ENCODE measurements at regions of chr4 and their contacts with region 1.

Region 1: DNA sequence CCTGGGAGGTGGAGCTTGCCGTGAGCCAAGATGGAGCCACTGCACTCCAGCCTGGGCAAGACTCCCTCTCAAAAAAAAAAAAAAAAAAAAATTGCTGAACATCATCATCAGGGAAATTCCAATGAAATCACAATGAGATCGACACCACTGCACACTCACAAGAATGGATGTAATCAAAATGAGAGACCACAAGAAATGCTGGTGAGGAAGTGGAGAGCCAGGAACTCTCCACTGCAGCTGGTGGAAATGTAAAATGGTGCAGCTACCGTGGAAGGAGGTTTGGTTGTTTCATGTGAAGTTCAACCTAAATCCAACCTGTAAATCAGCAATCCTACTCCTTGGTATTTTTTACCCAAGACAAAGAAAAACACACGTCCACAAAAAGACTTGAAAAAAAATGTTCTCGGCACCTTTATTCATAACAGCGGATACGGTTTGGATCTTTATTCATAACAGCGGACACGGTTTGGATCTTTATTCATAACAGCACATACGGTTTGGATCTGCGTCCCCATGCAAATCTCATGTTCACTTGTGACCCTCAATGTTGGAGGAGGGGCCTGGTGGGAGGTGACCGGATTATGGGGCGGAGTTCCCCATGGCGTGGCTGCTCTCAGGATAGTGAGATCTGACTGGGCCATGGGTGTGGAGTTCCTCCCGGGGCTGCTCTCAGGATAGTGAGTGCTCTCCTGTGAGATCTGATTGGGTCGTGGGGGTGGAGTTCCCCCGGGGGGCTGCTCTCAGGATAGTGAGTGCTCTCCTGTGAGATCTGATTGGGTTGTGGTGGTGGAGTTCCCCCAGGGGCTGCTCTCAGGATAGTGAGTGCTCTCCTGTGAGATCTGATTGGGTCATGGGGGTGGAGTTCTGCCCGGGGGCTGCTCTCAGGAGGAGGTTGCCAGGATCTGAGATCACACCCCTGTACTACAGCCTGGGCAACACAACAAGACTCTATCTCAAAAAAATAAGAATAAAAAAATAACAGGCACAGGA is 7.7 kb downstream of the GAK start:
- DNase-seq: peak; percentile 50
- ATAC-seq: peak; percentile 74
- H3K4me3 ChIP-seq: no peak overlapping the region; the same call in 1 of the 2 replicates
- H3K27ac ChIP-seq: peak overlapping the region; percentile 79
- H3K4me1 ChIP-seq: peaks cover 45% of the 10 kb centered on the region
- H3K27me3 ChIP-seq: no peaks in the 10 kb centered on the region
- CTCF ChIP-seq: no peak
- EP300 ChIP-seq: no peak
- POLR2A ChIP-seq: no peak
- RAD21 ChIP-seq: no peak

Region 2: DNA sequence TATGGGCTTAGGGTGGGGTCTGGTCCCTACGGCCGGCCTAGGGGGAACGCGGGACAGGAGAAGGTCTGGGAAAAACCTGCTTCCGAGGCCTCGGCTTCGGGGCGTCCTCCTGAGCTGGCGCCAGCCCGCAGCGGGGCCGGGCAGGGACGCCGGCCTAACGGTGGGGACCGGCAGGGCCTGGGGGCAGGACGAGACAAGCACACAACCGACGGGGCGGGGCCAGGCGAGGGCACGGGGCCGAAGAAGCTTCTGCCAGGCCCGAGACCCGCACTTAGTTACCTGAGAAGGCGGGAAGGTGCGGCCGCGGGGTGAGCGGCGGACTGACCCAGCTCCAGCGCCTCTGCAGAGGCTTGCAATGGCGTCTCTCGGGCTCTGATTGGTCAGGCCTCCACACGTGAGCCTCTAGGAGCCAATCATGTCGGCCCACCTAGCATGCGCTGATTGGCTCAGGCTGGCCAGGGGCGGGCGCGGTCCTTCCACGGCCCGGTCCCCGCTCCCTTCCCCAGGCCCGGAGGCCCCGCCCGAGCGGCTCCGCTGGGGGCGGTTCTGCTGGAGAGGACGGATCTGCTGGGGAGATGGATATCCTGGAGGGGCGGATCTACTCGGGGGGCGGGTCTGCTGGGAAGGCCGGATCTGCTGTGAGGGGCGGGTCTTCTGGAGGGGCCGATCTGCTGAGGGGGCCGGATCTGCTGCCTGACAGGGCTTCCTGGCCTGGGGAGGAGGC is 142.7 kb before region 1 on chr4:
- CTCF ChIA-PET with region 1: no interaction called
- POLR2A ChIA-PET with region 1: interaction called, 7 read pairs
- RAD21 ChIA-PET with region 1: no interaction called
- SMC1A ChIA-PET with region 1: no interaction called
- in situ Hi-C with region 1: no loop called
- intact Hi-C with region 1: loop called (anchors 5 kb)
- DNase-seq: peak; percentile 93
- ATAC-seq: peak; percentile 98
- H3K4me3 ChIP-seq: peak overlapping the region; percentile 92
- H3K27ac ChIP-seq: peak overlapping the region; percentile 96
- H3K4me1 ChIP-seq: peaks cover 11% of the 10 kb centered on the region
- H3K27me3 ChIP-seq: peaks cover 0 to 3% of the 10 kb centered on the region in 2 experiments; a peak in 1 of 4 replicates
- CTCF ChIP-seq: no peak
- EP300 ChIP-seq: no peak
- POLR2A ChIP-seq: peak; percentile 98
- RAD21 ChIP-seq: no peak

Region 3: GRCh38 chr4:891747-892146 is 32.7 kb before region 1 on chr4:
- CTCF ChIA-PET with region 1: no interaction called
- POLR2A ChIA-PET with region 1: no interaction called
- RAD21 ChIA-PET with region 1: no interaction called
- SMC1A ChIA-PET with region 1: no interaction called
- in situ Hi-C with region 1: no loop called
- intact Hi-C with region 1: no loop called
- DNase-seq: no peak
- ATAC-seq: peak; percentile 32
- H3K4me3 ChIP-seq: no peak overlapping the region
- H3K27ac ChIP-seq: no peak overlapping the region
- H3K4me1 ChIP-seq: no peaks in the 10 kb centered on the region
- H3K27me3 ChIP-seq: no peaks in the 10 kb centered on the region
- CTCF ChIP-seq: 0 out of 6 replicates have a peak, but pooled peaks of 2 of the 3 experiments have one; percentile 8 to 14
- EP300 ChIP-seq: no peak
- POLR2A ChIP-seq: no peak
- RAD21 ChIP-seq: peak; percentile 24; the same call in 1 of the 2 replicates